CD4-positive, alpha-beta T cell (primary cell): ENCODE measurements at regions of chr2 and their contacts with region 1.

Region 1: DNA sequence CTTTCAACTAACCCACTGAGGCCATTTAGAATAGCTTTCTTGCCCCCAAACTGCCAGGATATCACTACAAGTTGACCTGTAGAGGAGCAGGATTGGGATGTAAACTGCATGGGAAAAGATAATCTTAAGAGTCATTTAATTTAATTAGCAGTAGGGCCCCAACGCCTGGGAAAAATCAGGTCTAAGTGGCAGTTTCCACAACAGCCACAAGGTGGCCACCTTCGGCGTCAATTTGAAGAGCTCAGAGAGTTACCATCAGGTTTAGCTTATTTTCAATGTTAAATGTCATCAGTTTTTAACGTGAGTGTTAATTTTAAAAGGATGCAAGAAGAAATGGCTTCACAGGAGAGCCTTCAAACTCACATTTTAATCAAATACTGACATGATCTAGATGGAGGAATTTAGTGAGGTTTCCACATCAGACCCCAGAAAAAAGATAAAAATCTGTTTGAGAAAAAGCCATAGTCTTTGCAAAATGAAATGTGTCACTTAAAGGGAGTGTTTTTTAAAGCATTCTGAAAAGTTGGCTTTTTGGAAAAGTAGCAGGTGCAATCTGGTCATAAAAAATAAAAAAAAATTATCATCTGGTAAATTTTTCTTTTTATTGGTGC is 77.3 kb upstream of the UPP2 start:
- DNase-seq: peak; percentile 21 to 68 (median 42)
- ATAC-seq: peak; percentile 68
- H3K4me3 ChIP-seq: no peak overlapping the region
- H3K4me3 Mint-ChIP-seq: no peak overlapping the region
- H3K27ac ChIP-seq: no peak overlapping the region
- H3K27ac Mint-ChIP-seq: no peak overlapping the region
- H3K4me1 ChIP-seq: no peaks in the 10 kb centered on the region
- H3K4me1 Mint-ChIP-seq: peaks cover 11% of the 10 kb centered on the region
- H3K27me3 ChIP-seq: no peaks in the 10 kb centered on the region
- H3K27me3 Mint-ChIP-seq: no peaks in the 10 kb centered on the region
- CTCF ChIP-seq: peak; percentile 86

Region 2: GRCh38 chr2:158006961-158007719 is 17.3 kb before region 1 on chr2:
- CTCF ChIA-PET with region 1: interaction called, 10 read pairs
- POLR2A ChIA-PET with region 1: no interaction called
- intact Hi-C with region 1: no loop called
- DNase-seq: peak in 2 of 14 experiments; percentile 16 to 20
- ATAC-seq: no peak
- H3K4me3 ChIP-seq: no peak overlapping the region
- H3K4me3 Mint-ChIP-seq: no peak overlapping the region
- H3K27ac ChIP-seq: no peak overlapping the region
- H3K27ac Mint-ChIP-seq: no peak overlapping the region
- H3K4me1 ChIP-seq: no peaks in the 10 kb centered on the region
- H3K4me1 Mint-ChIP-seq: peaks cover 9% of the 10 kb centered on the region
- H3K27me3 ChIP-seq: no peaks in the 10 kb centered on the region
- H3K27me3 Mint-ChIP-seq: no peaks in the 10 kb centered on the region
- CTCF ChIP-seq: no peak

Region 3: GRCh38 chr2:158456309-158457066 is 432.1 kb after region 1 on chr2 and contains the starts of genes CCDC148 and PKP4:
- CTCF ChIA-PET with region 1: no interaction called
- POLR2A ChIA-PET with region 1: no interaction called
- intact Hi-C with region 1: loop called in 1 of 2 experiments (anchors 10 kb)
- DNase-seq: peak; percentile 71 to 97 (median 84)
- ATAC-seq: peak; percentile 90
- H3K4me3 ChIP-seq: peak within 1 kb of the TSS; percentile 76
- H3K4me3 Mint-ChIP-seq: peak within 1 kb of the TSS; percentile 99
- H3K27ac ChIP-seq: peak within 1 kb of the TSS; percentile 33 to 47
- H3K27ac Mint-ChIP-seq: peak within 1 kb of the TSS; percentile 84
- H3K4me1 ChIP-seq: peaks cover 15% of the 10 kb centered on the region
- H3K4me1 Mint-ChIP-seq: peaks cover 28% of the 10 kb centered on the region
- H3K27me3 ChIP-seq: no peaks in the 10 kb centered on the region
- H3K27me3 Mint-ChIP-seq: no peaks in the 10 kb centered on the region
- CTCF ChIP-seq: no peak
- total RNA-seq, gene CCDC148: not detected
- total RNA-seq, gene PKP4: 10.8 to 14.6 TPM

Region 4: GRCh38 chr2:158745044-158745865 is 720.9 kb after region 1 on chr2:
- CTCF ChIA-PET with region 1: interaction called, 19 read pairs
- POLR2A ChIA-PET with region 1: interaction called, 3 read pairs
- intact Hi-C with region 1: loop called in 1 of 2 experiments (anchors 2 kb)
- DNase-seq: peak in 12 of 14 experiments; percentile 3 to 56 (median 17)
- ATAC-seq: peak; percentile 43
- H3K4me3 ChIP-seq: no peak overlapping the region
- H3K4me3 Mint-ChIP-seq: no peak overlapping the region
- H3K27ac ChIP-seq: no peak overlapping the region
- H3K27ac Mint-ChIP-seq: no peak overlapping the region
- H3K4me1 ChIP-seq: no peaks in the 10 kb centered on the region
- H3K4me1 Mint-ChIP-seq: no peaks in the 10 kb centered on the region
- H3K27me3 ChIP-seq: peaks cover 14 to 20% of the 10 kb centered on the region in 2 experiments
- H3K27me3 Mint-ChIP-seq: peaks cover 46% of the 10 kb centered on the region
- CTCF ChIP-seq: no peak

Region 5: DNA sequence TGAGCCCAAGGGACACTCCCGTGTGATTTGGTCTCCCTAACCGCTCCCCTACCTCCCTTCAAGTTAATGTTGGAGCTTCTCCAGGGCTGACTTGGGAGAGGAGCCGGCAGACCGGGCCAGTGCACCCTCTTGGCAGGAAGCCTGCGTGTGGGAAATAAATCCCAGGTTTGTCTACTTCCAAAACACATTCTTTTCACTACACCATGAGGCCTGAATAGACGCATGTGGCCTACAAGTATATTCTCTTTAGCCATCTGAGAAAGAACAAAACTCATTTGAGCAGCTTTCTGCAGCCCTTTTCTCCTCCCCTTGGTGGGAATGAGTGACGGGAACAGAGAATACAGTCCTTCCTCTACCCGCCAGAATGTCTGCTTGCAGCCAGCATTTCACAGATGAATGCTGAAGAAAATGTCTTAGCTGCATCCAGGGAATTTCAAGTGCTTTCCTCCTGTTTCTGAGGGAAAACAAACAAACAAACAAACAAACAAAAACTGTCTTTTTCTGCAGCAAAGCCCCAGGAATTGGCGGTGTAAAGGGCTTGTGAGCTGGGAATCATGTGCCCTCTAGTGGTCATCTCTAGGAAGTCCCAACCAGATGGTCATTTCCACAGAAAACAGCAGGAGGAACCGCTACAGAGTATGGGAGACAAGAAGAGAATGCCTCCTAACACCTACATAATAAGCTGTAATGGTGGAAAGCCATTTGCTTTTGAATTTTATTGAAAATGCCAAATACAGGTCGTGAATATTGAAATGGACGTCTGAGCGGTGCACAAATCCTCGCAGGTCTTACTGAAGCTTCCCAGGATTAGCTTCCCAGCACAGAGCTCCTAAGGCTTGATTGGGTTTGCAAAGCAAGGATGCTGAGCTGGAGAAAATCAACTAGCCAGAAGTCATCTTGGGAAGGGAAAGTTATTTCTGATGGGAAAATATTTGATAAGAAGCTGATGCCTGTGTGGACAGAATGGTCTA is 729.5 kb after region 1 on chr2:
- CTCF ChIA-PET with region 1: interaction called, 21 read pairs
- POLR2A ChIA-PET with region 1: no interaction called
- intact Hi-C with region 1: loop called (anchors 1 to 2 kb)
- DNase-seq: peak in 9 of 14 experiments; percentile 4 to 66 (median 12)
- ATAC-seq: peak; percentile 61
- H3K4me3 ChIP-seq: no peak overlapping the region
- H3K4me3 Mint-ChIP-seq: no peak overlapping the region
- H3K27ac ChIP-seq: no peak overlapping the region
- H3K27ac Mint-ChIP-seq: no peak overlapping the region
- H3K4me1 ChIP-seq: no peaks in the 10 kb centered on the region
- H3K4me1 Mint-ChIP-seq: no peaks in the 10 kb centered on the region
- H3K27me3 ChIP-seq: peaks cover 0 to 5% of the 10 kb centered on the region in 2 experiments
- H3K27me3 Mint-ChIP-seq: peaks cover 48% of the 10 kb centered on the region
- CTCF ChIP-seq: peak; percentile 90

Region 6: DNA sequence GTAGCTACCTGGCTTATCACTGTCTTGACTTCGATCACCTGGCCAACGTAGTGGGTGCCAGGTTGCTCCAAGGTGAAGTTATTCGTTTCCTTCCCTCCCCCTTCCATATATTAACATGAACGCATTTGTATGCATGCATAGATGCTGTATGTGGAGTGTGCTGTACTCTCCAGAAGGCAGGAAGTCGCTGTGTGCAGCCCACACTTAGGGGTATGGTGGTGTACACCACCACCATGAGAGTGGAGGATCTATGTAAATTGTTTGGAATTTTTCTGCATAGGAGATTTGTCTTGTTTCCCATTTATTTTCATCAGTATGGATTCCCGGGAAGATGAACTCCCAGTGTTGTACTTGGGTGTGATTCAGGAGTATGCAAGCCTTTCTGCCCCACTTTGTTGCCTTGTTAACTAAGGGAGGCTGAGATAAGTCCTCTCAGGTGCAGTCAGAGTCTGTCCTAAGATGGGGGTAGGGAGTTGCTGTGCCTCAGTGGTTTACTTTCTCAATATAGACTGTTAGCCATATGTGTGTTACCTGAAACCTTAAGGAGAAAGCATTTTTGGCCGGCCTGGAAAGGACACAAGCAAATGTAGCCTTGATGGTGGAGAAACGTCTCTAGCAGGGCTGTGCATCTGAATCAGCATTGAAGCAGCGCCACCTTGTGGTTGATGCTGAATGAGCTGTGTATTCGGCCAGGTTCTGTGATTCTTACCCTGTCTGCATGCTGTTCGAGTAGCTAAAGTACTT is 1093.9 kb after region 1 on chr2:
- CTCF ChIA-PET with region 1: no interaction called
- POLR2A ChIA-PET with region 1: no interaction called
- intact Hi-C with region 1: loop called in 1 of 2 experiments (anchors 10 kb)
- DNase-seq: peak; percentile 61 to 87 (median 72)
- ATAC-seq: peak; percentile 91
- H3K4me3 ChIP-seq: no peak overlapping the region
- H3K4me3 Mint-ChIP-seq: no peak overlapping the region
- H3K27ac ChIP-seq: no peak overlapping the region
- H3K27ac Mint-ChIP-seq: no peak overlapping the region
- H3K4me1 ChIP-seq: peaks cover 8% of the 10 kb centered on the region
- H3K4me1 Mint-ChIP-seq: peaks cover 8% of the 10 kb centered on the region
- H3K27me3 ChIP-seq: peaks cover 0 to 3% of the 10 kb centered on the region in 2 experiments
- H3K27me3 Mint-ChIP-seq: no peaks in the 10 kb centered on the region
- CTCF ChIP-seq: peak; percentile 95